Left cardiac atrium (tissue), 4 donors: ENCODE measurements at regions of chr6 and their contacts with region 1.

Region 1: DNA sequence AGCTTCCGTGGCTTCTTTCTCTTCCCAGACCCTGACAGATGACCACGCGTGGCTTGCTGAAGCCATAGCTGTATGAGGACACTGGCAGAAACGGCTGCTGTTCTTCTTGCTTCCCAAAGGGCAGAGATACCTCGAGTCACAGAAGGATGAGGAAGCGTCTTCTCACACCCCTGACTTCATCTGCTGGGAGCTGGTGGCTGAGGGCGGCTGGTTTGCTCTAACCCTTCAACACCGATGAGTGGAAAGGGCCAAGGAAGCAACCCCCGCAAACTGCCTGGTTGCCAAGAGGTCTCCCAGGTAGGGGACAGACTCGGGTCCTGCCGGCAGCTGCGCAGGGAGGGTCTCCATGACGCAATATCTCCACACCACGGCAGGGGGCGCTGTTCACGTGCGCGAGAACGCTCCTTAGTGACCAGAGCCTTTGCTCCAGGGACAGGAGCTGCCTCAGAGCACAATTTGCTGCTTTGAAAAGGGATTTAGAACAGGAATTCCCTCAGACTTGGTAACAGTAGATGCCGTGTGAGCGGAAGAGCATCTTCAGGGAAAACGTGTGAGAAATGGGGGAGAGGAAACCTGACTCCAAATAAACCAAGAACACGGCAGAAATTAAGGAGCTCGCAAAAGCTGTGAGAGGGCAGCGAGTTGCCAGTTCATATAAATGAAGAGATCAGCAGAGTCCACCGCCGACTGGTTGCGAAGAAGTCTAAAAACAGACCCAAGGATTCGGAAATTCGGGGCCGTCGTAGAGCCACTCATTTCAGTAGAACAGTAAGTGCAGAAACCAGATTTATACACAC is 80.2 kb downstream of the ERMARD start:
- DNase-seq: peak; percentile 77
- ATAC-seq: peak; percentile 90 to 93

Region 2: DNA sequence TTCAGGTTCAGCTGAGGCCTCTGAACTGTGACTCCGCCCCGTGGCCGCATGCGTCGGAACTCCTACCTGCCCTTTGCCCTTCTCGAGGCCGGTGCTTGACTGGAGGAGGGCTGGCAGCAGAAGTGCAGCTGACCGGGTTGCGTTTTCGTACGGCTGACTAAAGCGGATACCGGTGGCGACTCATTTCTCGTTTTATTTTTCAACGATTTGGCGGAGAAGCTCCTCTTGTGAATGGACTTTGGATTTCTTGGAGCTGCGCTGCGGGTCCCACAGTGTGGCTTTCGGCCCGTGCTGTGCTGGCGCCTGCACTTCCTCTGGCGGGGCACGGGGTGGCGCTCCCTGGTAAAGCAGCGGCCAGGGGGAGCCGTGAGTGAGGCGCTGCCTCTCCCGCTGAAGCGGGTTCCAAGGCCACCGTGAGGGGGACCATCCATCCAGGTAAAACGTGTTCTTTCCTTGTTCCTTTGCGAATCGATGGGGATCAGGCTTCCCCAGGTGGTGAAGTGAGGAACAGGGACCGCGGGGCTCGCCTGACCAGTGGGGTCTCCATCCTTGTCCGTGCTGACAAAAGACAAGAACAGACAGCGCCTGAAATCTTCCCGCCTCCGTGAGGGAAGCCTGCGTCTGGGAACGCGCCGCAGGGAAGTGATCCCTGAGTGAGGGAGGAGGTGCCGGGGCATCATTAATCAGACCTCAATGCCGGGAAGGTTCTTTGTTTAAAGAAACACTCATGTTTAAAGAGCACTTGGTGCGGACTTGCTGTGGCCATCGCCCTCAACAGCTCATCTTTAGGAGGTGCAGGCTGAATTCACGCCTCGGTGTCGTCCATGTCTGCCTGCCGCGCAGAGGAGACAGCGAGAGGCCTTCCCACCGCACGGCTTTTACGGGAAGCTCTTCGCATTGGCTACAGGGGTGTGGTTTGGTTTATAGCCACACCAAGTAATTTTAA is 41.4 kb before region 1 on chr6:
- intact Hi-C with region 1: no loop called
- DNase-seq: peak; percentile 79
- ATAC-seq: peak; percentile 95 to 97

Region 3: DNA sequence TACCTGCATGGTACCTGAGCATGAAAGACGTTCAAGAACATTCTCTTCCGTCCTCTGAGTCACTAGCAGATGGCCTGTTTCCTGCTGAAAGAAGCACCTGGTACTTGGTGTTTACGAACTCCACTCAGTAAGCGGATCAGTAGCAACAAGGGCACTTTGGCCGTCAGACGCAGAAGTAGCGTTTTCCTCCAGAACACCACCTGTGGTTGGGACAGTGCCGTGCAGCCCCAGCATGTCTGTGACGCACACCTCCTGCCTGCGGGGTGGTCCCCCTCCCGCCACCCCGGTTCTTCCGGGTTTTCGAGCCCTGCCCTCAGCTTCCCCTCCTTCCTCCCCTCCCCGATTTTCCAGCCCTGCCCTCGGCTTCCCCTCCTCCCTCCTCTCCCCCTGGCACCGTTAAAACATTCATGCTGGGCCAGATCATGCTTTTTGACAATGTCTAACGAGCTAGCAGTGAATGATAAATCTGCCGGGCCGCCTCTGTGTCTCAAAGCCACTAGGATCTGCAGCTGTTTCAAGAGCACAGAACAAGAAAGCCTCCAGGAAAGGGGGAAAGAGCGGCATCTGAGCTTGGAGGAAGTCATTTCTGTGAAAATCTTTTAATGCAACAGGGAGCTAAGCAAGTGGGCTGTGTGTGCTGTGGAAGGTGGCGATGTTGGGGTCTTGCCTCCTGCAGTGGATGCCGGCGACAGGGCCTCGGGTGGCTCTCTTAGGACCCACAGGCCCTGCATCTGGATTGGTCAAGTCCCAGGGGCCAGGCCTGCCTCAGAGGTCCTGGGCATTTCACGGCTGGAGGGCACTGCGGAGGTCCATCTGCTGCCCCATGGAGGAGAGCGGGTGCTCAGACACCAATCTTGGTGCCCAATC is 127.7 kb after region 1 on chr6:
- intact Hi-C with region 1: loop called in 1 of 2 experiments (anchors 10 kb)
- DNase-seq: no peak
- ATAC-seq: peak in 1 of 2 donors; percentile 6

Region 4: DNA sequence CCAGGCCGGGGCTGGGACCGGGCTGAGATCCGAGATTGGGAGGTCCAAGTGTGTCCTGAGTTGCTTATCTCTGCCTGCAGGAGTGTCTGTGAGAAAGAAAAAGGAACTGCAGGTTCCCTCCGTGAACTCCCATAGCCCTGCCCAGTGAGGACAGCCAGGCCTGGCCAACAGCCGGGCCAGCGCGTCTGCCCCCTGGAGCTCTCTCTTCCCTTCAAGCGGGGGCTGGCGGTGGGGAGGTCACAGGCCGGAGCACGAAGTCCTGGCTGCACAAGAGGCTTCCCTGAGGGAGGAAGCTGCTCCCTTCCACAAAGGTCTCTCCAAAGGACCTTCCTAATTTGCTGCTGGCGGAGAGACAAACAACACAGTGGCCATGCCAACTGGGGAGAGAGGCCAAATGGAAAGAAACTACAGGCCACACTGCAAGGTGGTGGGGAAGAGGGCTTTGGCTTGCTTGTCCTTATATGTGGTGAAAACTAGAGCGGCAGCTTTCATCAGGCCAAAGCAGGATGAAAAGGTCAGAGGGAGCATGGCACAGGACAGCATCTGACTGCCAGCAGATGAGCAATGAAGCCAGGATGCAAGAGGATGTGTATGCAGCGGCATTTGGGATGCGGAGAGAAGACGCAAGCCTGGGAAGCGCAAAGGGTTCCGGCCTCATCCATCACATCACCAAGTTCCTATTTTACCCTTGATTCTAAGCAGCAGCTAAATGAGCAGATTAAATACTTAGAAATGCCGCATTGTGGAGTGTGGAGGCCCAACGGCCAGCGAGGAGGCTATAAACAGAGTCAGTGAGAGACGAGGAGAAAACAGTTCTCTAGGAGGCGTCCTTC is 179.8 kb after region 1 on chr6:
- intact Hi-C with region 1: loop called in 1 of 2 experiments (anchors 10 kb)
- DNase-seq: peak; percentile 86
- ATAC-seq: peak; percentile 89 to 96

Region 5: DNA sequence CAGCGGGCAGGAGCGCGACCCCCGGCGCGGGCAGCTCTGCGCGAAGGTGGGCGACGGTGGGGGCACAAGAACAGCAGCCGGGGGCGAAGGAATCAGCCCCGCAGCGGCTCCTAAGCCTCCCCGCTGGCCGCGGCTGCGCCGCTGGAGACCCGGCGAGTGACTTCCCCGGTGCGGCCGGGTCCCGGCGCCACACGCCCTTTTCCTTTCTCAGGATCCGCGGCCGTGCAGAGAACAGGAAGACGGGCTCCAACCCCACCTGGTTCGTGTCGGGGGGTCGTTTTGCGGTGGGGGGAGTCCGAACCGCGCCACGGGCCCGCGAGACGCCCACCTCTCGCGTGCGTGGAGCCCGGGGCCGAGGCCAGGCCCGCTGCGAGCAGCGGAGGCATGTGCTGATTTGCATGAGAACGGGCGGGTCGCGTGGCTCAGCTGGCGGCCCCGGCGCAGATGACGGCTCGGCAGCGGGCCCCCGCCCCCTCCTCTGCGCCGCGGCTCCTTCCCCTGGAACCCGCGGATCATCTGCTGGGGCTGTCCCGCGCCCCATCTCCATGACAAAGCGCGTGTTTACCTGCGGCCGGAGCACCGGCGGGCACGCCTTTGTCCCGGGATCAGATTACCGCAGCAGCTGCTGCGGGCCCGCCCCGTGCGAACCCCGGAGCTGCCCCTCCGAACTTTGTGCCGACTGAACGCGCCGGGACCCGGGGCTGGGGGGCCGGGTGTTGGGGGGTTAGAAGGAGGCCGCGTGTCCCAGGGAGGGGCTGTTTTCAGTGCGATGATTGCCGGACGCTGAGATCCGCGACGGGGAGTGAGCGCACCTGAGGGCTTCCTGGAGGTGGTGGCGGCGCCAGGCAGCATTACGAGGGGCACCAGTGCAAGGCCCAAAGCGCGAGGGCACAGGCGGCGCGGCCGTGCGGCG is 464.1 kb after region 1 on chr6:
- intact Hi-C with region 1: loop called (anchors 10 kb)
- DNase-seq: no peak
- ATAC-seq: peak; percentile 24 to 39

Region 6: GRCh38 chr6:170529839-170530469 is 698.3 kb after region 1 on chr6:
- intact Hi-C with region 1: loop called (anchors 1 to 10 kb)
- DNase-seq: peak; percentile 82
- ATAC-seq: peak; percentile 87 to 89